ENCODE measurements at regions of chr1 and their contacts with region 1.

Region 1: GRCh38 chr1:236451796-236452373 is 57.8 kb downstream of the EDARADD start:
- DNase-seq: no peak
- H3K4me3 ChIP-seq: no peak overlapping the region
- H3K27ac ChIP-seq: no peak overlapping the region
- H3K4me1 ChIP-seq: no peaks in the 10 kb centered on the region
- H3K27me3 ChIP-seq: no peaks in the 10 kb centered on the region
- CTCF ChIP-seq: no peak
- POLR2A ChIP-seq: no peak

Region 2: DNA sequence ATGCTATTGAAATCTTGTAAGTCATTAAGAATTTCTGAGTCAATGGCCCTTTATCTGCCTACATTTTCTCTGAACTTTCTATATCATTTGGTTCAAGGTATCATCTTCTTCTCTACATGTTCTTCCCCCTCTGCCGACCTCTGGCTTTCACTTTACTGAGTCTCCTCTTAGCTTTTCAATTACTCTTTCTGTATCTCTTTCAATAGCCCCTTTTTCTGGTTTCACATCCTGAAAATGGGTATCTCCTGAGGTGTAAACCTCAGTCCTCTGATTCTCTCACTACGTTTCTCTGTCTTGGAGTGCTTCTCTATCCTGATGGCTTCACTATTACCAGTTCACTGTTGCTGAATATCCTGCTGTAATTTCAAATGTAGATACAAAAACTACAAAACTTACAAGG is 684.1 kb before region 1 on chr1:
- intact Hi-C with region 1: no loop called
- DNase-seq: no peak
- H3K4me3 ChIP-seq: no peak overlapping the region
- H3K27ac ChIP-seq: no peak overlapping the region
- H3K4me1 ChIP-seq: no peaks in the 10 kb centered on the region
- H3K27me3 ChIP-seq: no peaks in the 10 kb centered on the region
- CTCF ChIP-seq: no peak
- POLR2A ChIP-seq: no peak

Region 3: GRCh38 chr1:236142253-236143103 is 309.4 kb before region 1 on chr1 and contains the start of gene GPR137B:
- intact Hi-C with region 1: no loop called
- DNase-seq: peak in 1 of 2 donors; percentile 34
- H3K4me3 ChIP-seq: peak within 1 kb of the TSS; percentile 55 to 95 (median 84)
- H3K27ac ChIP-seq: peak within 1 kb of the TSS; percentile 22 to 71
- H3K4me1 ChIP-seq: peaks cover 0 to 7% of the 10 kb centered on the region in 2 donors
- H3K27me3 ChIP-seq: no peaks in the 10 kb centered on the region
- CTCF ChIP-seq: no peak
- POLR2A ChIP-seq: no peak
- total RNA-seq, gene GPR137B: 24.1 to 29.6 (median 25.6) TPM

Region 4: GRCh38 chr1:236465959-236466303 is 14.0 kb after region 1 on chr1:
- intact Hi-C with region 1: no loop called
- DNase-seq: no peak
- H3K4me3 ChIP-seq: no peak overlapping the region
- H3K27ac ChIP-seq: no peak overlapping the region
- H3K4me1 ChIP-seq: no peaks in the 10 kb centered on the region
- H3K27me3 ChIP-seq: no peaks in the 10 kb centered on the region
- CTCF ChIP-seq: no peak
- POLR2A ChIP-seq: no peak

Region 5: DNA sequence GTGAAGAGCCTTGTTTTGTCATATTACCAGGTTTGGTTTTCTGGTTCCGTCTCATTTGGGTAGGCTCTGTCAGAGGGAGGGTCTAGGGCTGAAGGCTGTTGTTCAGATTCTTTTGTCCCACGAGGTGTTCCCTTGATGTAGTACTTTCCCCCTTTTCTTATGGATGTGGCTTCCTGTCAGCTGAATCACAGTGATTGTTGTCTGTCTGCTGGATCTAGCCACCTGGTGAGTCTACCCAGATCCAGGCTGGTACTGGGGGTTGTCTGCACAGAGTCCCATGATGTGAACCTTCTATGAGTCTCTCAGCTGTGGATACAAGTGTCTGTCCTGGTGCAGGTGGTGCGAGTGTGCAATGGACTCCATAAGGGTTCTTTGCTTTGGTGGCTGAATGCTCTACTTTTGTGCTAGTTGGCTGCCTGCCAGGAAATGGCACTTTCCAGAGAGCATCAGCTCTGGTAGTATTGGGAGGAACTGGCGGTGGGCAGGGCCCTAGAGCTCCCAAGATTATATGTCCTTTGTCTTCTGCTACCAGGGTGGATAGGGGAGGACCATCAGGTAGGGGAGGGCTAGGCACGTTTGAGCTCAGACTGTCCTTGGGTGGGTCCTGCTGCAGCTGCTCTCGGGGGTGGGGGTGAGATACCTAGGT is 836.1 kb after region 1 on chr1:
- intact Hi-C with region 1: loop called (anchors 10 kb)
- DNase-seq: no peak
- H3K4me3 ChIP-seq: no peak overlapping the region
- H3K27ac ChIP-seq: no peak overlapping the region
- H3K4me1 ChIP-seq: no peaks in the 10 kb centered on the region
- H3K27me3 ChIP-seq: no peaks in the 10 kb centered on the region
- CTCF ChIP-seq: no peak
- POLR2A ChIP-seq: no peak